HCT116 (cell line): ENCODE measurements at regions of chr16 and their contacts with region 1.

Region 1: GRCh38 chr16:4402439-4403132 is 13.8 kb downstream of the CORO7 start:
- DNase-seq: peak; percentile 35
- ATAC-seq: peak; percentile 91
- H3K4me3 ChIP-seq: peak overlapping the region in 1 of 2 experiments; percentile 34; a peak in 2 of 4 replicates
- H3K27ac ChIP-seq: no peak overlapping the region; the same call in 1 of the 2 replicates
- H3K4me1 ChIP-seq: peaks cover 10 to 11% of the 10 kb centered on the region in 2 experiments; a peak in 3 of 4 replicates
- H3K27me3 ChIP-seq: no peaks in the 10 kb centered on the region
- CTCF ChIP-seq: peak; percentile 90 to 96 (median 94)
- POLR2A ChIP-seq: no peak
- RAD21 ChIP-seq: peak; percentile 98

Region 2: DNA sequence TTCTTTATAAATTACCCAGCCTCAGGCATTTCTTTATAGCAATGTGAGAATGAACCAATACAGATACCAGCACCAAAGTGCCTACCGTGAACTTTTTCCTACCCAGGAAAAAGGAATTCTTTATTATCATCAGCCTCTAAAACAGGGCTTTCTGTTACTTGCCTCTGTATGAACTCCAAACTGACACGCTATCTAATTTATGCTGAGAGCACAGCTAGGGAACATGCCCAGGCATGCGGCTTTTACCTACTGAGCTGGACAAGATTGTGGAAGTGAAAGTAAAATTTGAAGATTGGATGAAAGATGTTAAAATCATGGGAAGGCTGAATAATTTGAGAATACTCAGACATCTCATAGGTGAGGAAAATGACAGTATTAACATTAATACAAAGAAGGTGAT is 261.9 kb before region 1 on chr16:
- CTCF ChIA-PET with region 1: no interaction called
- POLR2A ChIA-PET with region 1: no interaction called
- RAD21 ChIA-PET with region 1: no interaction called
- intact Hi-C with region 1: no loop called
- DNase-seq: no peak
- ATAC-seq: no peak
- H3K4me3 ChIP-seq: no peak overlapping the region
- H3K27ac ChIP-seq: peak overlapping the region; percentile 17
- H3K4me1 ChIP-seq: peaks cover 18 to 25% of the 10 kb centered on the region in 2 experiments
- H3K27me3 ChIP-seq: no peaks in the 10 kb centered on the region
- CTCF ChIP-seq: no peak
- POLR2A ChIP-seq: no peak
- RAD21 ChIP-seq: no peak

Region 3: GRCh38 chr16:4261557-4262172 is 140.9 kb before region 1 on chr16:
- CTCF ChIA-PET with region 1: interaction called, 11 read pairs
- POLR2A ChIA-PET with region 1: no interaction called
- RAD21 ChIA-PET with region 1: interaction called in 1 of 2 experiments, 4 read pairs
- intact Hi-C with region 1: loop called (anchors 2 kb)
- DNase-seq: peak; percentile 22
- ATAC-seq: peak; percentile 76
- H3K4me3 ChIP-seq: no peak overlapping the region
- H3K27ac ChIP-seq: no peak overlapping the region
- H3K4me1 ChIP-seq: peaks cover 0 to 15% of the 10 kb centered on the region in 2 experiments; a peak in 3 of 4 replicates
- H3K27me3 ChIP-seq: no peaks in the 10 kb centered on the region
- CTCF ChIP-seq: peak; percentile 59 to 91 (median 90); a peak in 5 of 6 replicates
- POLR2A ChIP-seq: no peak
- RAD21 ChIP-seq: peak; percentile 77

Region 4: DNA sequence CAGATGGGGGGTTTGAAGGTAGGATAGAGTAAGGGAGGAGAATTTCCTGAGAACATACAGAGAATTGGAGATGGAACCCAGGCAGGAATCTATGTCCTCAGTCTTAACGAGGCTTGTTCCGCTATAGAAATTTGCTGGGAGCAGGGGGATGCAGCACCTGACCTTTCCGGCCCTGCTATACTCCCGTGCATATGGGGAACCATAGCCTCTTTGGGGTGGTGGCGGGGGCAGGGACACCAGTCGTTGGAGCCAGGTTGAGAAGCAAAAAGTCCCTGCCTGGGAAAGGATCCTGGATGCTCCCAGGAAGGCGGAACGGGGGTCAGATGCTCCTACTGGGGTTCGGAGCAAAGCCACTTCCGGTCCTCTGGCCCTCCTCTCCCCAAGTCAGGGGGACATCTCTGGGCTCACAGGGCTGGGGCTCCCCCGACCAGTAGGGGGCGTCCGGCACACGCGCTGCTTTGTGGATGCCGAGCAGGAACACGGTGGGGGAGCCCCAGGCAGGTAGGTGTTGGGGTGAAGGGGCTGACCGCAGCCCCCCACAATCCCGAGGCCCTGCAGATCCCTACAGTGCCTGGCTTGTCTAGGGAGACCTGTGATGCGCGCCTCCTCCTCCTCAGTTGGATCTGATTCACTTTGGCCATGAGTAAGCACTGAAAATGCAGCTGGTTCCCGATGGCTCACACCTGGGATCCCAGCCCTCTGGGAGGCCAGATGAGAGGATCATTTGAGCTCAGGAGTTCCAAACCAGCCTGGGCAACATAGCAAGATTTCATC is 114.3 kb before region 1 on chr16:
- CTCF ChIA-PET with region 1: interaction called, 18 read pairs
- POLR2A ChIA-PET with region 1: no interaction called
- RAD21 ChIA-PET with region 1: no interaction called
- intact Hi-C with region 1: no loop called
- DNase-seq: no peak
- ATAC-seq: peak; percentile 85
- H3K4me3 ChIP-seq: peak overlapping the region in 1 of 2 experiments; percentile 20; a peak in 2 of 4 replicates
- H3K27ac ChIP-seq: no peak overlapping the region; the same call in 1 of the 2 replicates
- H3K4me1 ChIP-seq: peaks cover 48 to 75% of the 10 kb centered on the region in 2 experiments
- H3K27me3 ChIP-seq: no peaks in the 10 kb centered on the region
- CTCF ChIP-seq: peak; percentile 88 to 99 (median 98)
- POLR2A ChIP-seq: no peak
- RAD21 ChIP-seq: peak; percentile 95

Region 5: GRCh38 chr16:4350787-4351659 is 51.6 kb before region 1 on chr16 and contains the start of gene PAM16:
- CTCF ChIA-PET with region 1: interaction called, 13 read pairs
- POLR2A ChIA-PET with region 1: no interaction called
- RAD21 ChIA-PET with region 1: interaction called in 1 of 2 experiments, 3 read pairs
- intact Hi-C with region 1: no loop called
- DNase-seq: peak; percentile 87
- ATAC-seq: peak; percentile 94
- H3K4me3 ChIP-seq: peak within 1 kb of the TSS; percentile 98 to 99
- H3K27ac ChIP-seq: peak within 1 kb of the TSS; percentile 94
- H3K4me1 ChIP-seq: peaks cover 7 to 19% of the 10 kb centered on the region in 2 experiments
- H3K27me3 ChIP-seq: no peaks in the 10 kb centered on the region
- CTCF ChIP-seq: no peak
- POLR2A ChIP-seq: peak; percentile 47
- RAD21 ChIP-seq: no peak
- total RNA-seq, gene PAM16: 102 TPM

Region 6: GRCh38 chr16:4358831-4359561 is 43.6 kb before region 1 on chr16:
- CTCF ChIA-PET with region 1: interaction called, 52 read pairs
- POLR2A ChIA-PET with region 1: no interaction called
- RAD21 ChIA-PET with region 1: interaction called, 9 to 13 read pairs
- intact Hi-C with region 1: loop called (anchors 1 kb)
- DNase-seq: no peak
- ATAC-seq: peak; percentile 63
- H3K4me3 ChIP-seq: no peak overlapping the region
- H3K27ac ChIP-seq: no peak overlapping the region
- H3K4me1 ChIP-seq: peaks cover 6 to 12% of the 10 kb centered on the region in 2 experiments
- H3K27me3 ChIP-seq: no peaks in the 10 kb centered on the region
- CTCF ChIP-seq: peak; percentile 92 to 94 (median 92)
- POLR2A ChIP-seq: no peak
- RAD21 ChIP-seq: peak; percentile 95

Region 7: GRCh38 chr16:4373863-4374742 is 28.5 kb before region 1 on chr16:
- CTCF ChIA-PET with region 1: interaction called, 23 read pairs
- POLR2A ChIA-PET with region 1: no interaction called
- RAD21 ChIA-PET with region 1: no interaction called
- intact Hi-C with region 1: no loop called
- DNase-seq: no peak
- ATAC-seq: peak; percentile 18
- H3K4me3 ChIP-seq: peak overlapping the region in 1 of 2 experiments; percentile 80; a peak in 2 of 4 replicates
- H3K27ac ChIP-seq: peak overlapping the region; percentile 72
- H3K4me1 ChIP-seq: peaks cover 38 to 76% of the 10 kb centered on the region in 2 experiments
- H3K27me3 ChIP-seq: no peaks in the 10 kb centered on the region
- CTCF ChIP-seq: no peak
- POLR2A ChIP-seq: no peak
- RAD21 ChIP-seq: no peak